GM10248 (cell line): ENCODE measurements at regions of chr9 and their contacts with region 1.

Region 1: GRCh38 chr9:114930056-114930812 is at the start of gene TNFSF8:
- DNase-seq: peak; percentile 27
- CTCF ChIP-seq: no peak

Region 2: GRCh38 chr9:114919611-114920010 is 10.6 kb before region 1 on chr9:
- CTCF ChIA-PET with region 1: interaction called, 20 read pairs
- POLR2A ChIA-PET with region 1: no interaction called
- DNase-seq: no peak
- CTCF ChIP-seq: no peak

Region 3: GRCh38 chr9:115058684-115059315 is 128.6 kb after region 1 on chr9:
- CTCF ChIA-PET with region 1: no interaction called
- POLR2A ChIA-PET with region 1: no interaction called
- DNase-seq: no peak
- CTCF ChIP-seq: no peak